Dendritic cell treated with granulocyte-macrophage colony-stimulating factor and Interleukin-4, amounts not matched to agents 40 ng/mL and 50 ng/mL, for 4 days (primary cell): ENCODE measurements at regions of chr12 and their contacts with region 1.

Region 1: GRCh38 chr12:122062832-122063693 is 15.5 kb upstream of the MLXIP start:
- H3K4me3 Mint-ChIP-seq: peak overlapping the region; percentile 61
- H3K27ac Mint-ChIP-seq: peak overlapping the region; percentile 87
- H3K4me1 Mint-ChIP-seq: peaks cover 42% of the 10 kb centered on the region
- H3K27me3 Mint-ChIP-seq: peaks cover 4% of the 10 kb centered on the region

Region 2: GRCh38 chr12:122081697-122082221 is 18.7 kb after region 1 on chr12:
- intact Hi-C with region 1: loop called (anchors 2 kb)
- H3K4me3 Mint-ChIP-seq: peak overlapping the region; percentile 94
- H3K27ac Mint-ChIP-seq: peak overlapping the region; percentile 88
- H3K4me1 Mint-ChIP-seq: peaks cover 65% of the 10 kb centered on the region
- H3K27me3 Mint-ChIP-seq: no peaks in the 10 kb centered on the region